Cardiac septum (tissue), 1 donor: ENCODE measurements at regions of chr6 and their contacts with region 1.

Region 1: GRCh38 chr6:24855395-24856245 is 56.9 kb upstream of the ARMH2 start:
- DNase-seq: peak; percentile 81

Region 2: DNA sequence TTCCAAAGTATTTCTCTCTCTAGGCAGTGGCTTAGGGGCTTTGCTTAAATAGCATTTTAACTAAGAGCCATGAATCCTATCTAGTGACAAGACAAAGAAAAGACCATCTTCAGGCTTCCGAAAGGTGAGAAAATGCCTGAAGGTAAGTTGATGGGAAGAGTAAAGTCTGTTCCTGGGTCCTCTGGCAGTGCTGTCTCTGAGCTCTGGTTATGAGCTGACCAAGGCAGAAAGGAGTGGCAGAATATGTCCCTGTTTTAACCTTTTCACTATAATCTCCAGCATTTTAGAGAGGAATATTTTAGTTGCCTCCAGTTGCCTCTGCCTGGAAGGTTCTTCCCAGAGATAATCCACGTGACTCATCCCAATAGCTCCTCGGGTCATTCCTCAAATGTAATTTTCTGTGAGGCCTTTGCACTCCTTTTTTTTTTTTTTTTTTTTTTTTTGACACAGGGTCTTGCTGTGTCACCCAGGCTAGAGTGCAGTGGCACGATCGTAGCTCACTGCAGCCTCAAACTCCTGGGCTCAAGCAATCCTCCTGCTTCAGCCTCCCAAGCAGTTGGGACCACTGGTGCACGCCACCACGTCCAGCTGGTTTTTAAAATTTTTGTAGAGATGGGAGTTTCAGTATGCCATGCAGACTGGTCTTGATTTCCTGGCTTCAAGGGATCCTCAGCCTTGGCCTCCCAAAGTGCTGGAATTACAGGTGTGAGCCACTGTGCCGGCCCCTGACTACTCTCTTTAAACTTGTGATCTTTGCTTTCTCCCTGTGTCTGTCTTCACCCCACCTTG is 53.2 kb before region 1 on chr6:
- intact Hi-C with region 1: no loop called
- DNase-seq: no peak

Region 3: DNA sequence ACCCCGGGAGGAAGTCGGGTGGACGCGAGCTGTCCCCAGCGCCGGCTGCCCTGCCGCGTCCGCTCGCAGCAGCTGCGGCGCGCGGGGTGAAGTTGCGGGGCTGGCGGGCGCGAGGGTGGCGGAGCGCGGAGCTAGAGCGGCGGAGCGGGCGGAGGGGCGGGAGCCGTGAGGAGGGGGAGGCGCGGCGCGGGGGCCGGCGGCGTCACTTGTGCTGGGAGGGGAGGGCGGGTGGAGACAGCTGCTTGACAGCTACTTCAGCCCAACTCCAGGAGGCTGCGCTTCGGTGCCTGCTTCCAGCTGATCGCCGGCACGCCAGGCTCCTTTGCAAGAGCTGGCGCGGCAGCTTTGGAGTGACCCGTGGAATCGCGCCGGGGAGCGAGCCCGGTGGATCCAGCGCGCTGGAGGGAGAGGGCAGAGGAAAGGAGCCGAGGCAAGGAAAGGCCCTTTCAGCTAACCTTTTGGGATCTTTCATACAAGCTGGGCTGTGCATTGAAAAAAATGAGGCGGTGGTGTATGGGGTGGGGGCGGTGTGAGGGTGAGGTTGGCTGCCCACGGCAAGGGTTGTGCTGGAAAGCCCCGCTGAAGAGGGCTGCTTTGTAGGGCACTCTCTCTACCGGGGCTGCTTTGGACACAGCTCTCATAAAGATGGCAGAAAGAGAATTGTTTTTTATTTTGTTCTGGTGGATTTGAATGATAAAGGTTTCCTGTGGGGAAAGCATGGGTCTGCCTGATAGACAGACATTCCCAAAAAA is 55.5 kb after region 1 on chr6:
- intact Hi-C with region 1: loop called (anchors 5 kb)
- DNase-seq: peak; percentile 80

Region 4: DNA sequence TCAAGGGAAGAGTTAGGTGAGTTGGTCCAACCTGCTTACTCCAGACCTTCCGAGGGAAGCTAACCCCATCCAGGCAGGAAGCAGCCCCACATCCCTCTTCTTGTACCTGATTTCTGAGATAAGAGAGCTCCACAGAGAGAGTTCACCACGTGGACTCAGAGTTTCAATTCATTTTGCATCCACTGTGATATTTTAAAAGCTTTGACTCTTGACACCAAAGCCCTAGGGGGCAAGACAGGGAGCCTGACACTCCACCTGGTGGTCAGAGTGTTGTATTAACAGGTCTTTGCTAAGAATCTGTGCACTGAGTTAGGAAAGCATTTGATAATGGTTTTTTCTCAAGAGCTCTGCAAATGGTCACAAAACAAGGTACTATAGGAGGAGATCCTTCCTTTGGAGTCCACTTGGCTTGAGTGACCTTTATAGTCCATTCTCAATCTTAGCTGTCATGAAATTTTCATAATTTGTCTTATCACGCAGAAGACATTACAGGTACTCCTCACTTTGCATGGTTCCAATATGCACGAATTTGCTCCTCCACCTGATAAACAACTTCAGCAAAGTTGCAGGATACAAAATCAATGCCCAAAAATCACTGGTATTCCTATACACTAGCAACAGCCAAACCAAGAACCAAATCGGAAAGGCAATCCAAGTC is 136.3 kb after region 1 on chr6:
- intact Hi-C with region 1: loop called (anchors 2 kb)
- DNase-seq: no peak